IMR-90 (cell line): ENCODE measurements at regions of chr10 and their contacts with region 1.

Region 1: GRCh38 chr10:109959259-109960145 is 36.2 kb upstream of the XPNPEP1 start:
- DNase-seq: no peak
- ATAC-seq: no peak
- H3K4me3 ChIP-seq: no peak overlapping the region
- H3K27ac ChIP-seq: no peak overlapping the region
- H3K4me1 ChIP-seq: peaks cover 14% of the 10 kb centered on the region
- H3K27me3 ChIP-seq: no peaks in the 10 kb centered on the region
- CTCF ChIP-seq: no peak
- POLR2A ChIP-seq: no peak
- RAD21 ChIP-seq: no peak

Region 2: DNA sequence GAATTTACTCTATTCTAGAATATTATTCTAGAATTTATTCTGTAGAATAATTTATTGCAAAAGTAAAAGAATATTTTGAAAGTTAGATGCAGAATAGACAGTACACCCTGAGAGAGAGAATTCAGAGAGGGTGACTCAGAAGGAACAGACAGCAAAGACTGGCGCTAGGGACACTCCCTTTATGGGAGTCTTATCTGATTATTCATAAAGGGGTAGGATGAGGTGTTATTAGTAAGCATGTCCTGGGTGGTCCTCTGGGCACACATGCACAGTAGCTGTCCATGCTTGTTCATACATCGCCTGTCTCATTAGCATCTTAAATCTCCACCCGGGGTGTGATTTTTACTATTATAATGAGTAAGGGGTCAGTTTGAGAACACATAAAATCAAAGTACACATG is 136.3 kb before region 1 on chr10:
- CTCF ChIA-PET with region 1: no interaction called
- POLR2A ChIA-PET with region 1: no interaction called
- dilution Hi-C with region 1: no loop called
- in situ Hi-C with region 1: no loop called
- intact Hi-C with region 1: no loop called
- DNase-seq: no peak
- ATAC-seq: no peak
- H3K4me3 ChIP-seq: no peak overlapping the region
- H3K27ac ChIP-seq: no peak overlapping the region
- H3K4me1 ChIP-seq: no peaks in the 10 kb centered on the region
- H3K27me3 ChIP-seq: no peaks in the 10 kb centered on the region
- CTCF ChIP-seq: no peak
- POLR2A ChIP-seq: no peak
- RAD21 ChIP-seq: no peak

Region 3: GRCh38 chr10:109929501-109930219 is 29.8 kb before region 1 on chr10:
- CTCF ChIA-PET with region 1: no interaction called
- POLR2A ChIA-PET with region 1: no interaction called
- dilution Hi-C with region 1: no loop called
- in situ Hi-C with region 1: no loop called
- intact Hi-C with region 1: loop called (anchors 2 kb)
- DNase-seq: no peak
- ATAC-seq: no peak
- H3K4me3 ChIP-seq: no peak overlapping the region
- H3K27ac ChIP-seq: no peak overlapping the region
- H3K4me1 ChIP-seq: peaks cover 2% of the 10 kb centered on the region; the same call in 1 of the 2 replicates
- H3K27me3 ChIP-seq: no peaks in the 10 kb centered on the region
- CTCF ChIP-seq: no peak
- POLR2A ChIP-seq: no peak
- RAD21 ChIP-seq: no peak

Region 4: GRCh38 chr10:110304780-110305421 is 345.4 kb after region 1 on chr10 and contains the start of gene SMNDC1:
- CTCF ChIA-PET with region 1: no interaction called
- POLR2A ChIA-PET with region 1: no interaction called
- dilution Hi-C with region 1: no loop called
- in situ Hi-C with region 1: no loop called
- intact Hi-C with region 1: no loop called
- DNase-seq: peak; percentile 97
- ATAC-seq: peak; percentile 92
- H3K4me3 ChIP-seq: peak within 1 kb of the TSS; percentile 90
- H3K27ac ChIP-seq: peak within 1 kb of the TSS; percentile 76
- H3K4me1 ChIP-seq: peaks cover 4% of the 10 kb centered on the region; the same call in 1 of the 2 replicates
- H3K27me3 ChIP-seq: no peaks in the 10 kb centered on the region
- CTCF ChIP-seq: no peak
- POLR2A ChIP-seq: peak; percentile 81; the same call in 1 of the 2 replicates
- RAD21 ChIP-seq: no peak
- total RNA-seq, gene SMNDC1: 3.9 and 8.6 TPM in 2 replicates

Region 5: GRCh38 chr10:110487411-110488123 is 528.1 kb after region 1 on chr10:
- CTCF ChIA-PET with region 1: no interaction called
- POLR2A ChIA-PET with region 1: no interaction called
- dilution Hi-C with region 1: no loop called
- in situ Hi-C with region 1: no loop called
- intact Hi-C with region 1: no loop called
- DNase-seq: peak; percentile 55
- ATAC-seq: peak; percentile 73
- H3K4me3 ChIP-seq: no peak overlapping the region
- H3K27ac ChIP-seq: peak overlapping the region; percentile 24
- H3K4me1 ChIP-seq: peaks cover 15% of the 10 kb centered on the region
- H3K27me3 ChIP-seq: no peaks in the 10 kb centered on the region
- CTCF ChIP-seq: no peak
- POLR2A ChIP-seq: 0 out of 2 replicates have a peak, but pooled peaks have one; percentile 28
- RAD21 ChIP-seq: 0 out of 2 replicates have a peak, but pooled peaks have one; percentile 4